Ascending aorta (tissue), 2 donors: ENCODE measurements at regions of chr14 and their contacts with region 1.

Region 1: GRCh38 chr14:68669603-68670373 is 123.1 kb downstream of the ZFP36L1 start:
- DNase-seq: peak in 1 of 2 donors; percentile 58
- H3K4me3 ChIP-seq: no peak overlapping the region
- H3K27ac ChIP-seq: peak overlapping the region; percentile 47 to 64
- H3K4me1 ChIP-seq: peaks cover 7 to 60% of the 10 kb centered on the region in 2 donors
- H3K27me3 ChIP-seq: no peaks in the 10 kb centered on the region
- CTCF ChIP-seq: no peak

Region 2: GRCh38 chr14:68633071-68633991 is 36.5 kb before region 1 on chr14:
- intact Hi-C with region 1: loop called (anchors 5 kb)
- DNase-seq: no peak
- H3K4me3 ChIP-seq: no peak overlapping the region
- H3K27ac ChIP-seq: no peak overlapping the region
- H3K4me1 ChIP-seq: peaks cover 11 to 37% of the 10 kb centered on the region in 2 donors
- H3K27me3 ChIP-seq: no peaks in the 10 kb centered on the region
- CTCF ChIP-seq: no peak